Heart right ventricle (tissue), 16 donors: ENCODE measurements at regions of chr14 and their contacts with region 1.

Region 1: DNA sequence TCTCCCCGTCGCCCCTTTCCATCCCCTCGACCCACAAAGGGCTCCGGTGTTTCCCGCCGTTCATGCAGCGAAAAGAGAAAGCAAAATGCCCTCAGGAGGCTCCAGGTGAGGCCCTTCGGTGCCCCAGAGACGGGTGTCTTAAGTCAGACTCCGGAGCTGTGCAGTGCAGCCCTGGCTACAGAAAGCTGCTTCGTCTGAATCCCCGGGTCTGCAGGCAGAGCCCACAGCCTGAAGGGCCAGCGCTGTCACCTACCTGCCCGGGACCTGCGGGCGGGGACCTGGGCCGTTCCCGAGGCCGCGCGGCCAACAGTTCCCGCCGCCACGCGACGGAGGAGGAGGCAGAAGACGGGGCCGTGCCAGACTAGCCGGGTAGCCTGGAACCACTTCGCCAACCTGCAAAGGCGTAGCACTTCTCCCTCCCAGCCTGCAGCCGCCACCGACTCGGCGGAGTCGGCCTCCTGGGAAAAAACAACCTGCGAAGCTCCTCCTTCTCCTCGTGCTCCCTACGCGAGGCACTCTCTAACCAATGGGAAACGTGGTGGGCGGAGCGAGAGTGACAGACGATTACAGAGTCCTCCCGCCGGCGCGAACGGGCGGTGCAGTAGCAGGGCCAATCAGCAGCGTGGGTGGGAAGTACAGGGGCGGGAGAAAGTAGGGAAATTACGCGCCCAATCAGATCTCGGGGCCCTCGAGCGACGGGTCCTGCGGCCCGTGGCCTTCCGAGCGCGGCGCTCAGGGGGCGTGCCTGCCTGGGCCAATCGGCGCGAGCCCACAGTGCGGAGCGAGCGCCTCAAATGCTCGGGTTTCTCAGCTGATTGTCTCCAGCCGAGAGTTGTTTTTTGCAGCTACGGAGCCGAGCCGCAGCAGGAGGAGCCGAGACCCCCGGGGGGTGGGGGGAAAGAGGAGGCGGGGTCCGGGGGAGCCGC is at the starts of genes GPR137C and TXNDC16:
- DNase-seq: peak; percentile 99 to 100
- ATAC-seq: peak; percentile 97 to 100 (median 99)
- H3K4me3 ChIP-seq: peak within 1 kb of the TSS; percentile 66 to 95 (median 83)
- H3K27ac ChIP-seq: peak within 1 kb of the TSS; percentile 44 to 91 (median 81)
- H3K4me1 ChIP-seq: peaks cover 4 to 31% (median 20%) of the 10 kb centered on the region in 9 donors
- H3K27me3 ChIP-seq: no peaks in the 10 kb centered on the region
- CTCF ChIP-seq: no peak
- total RNA-seq, gene GPR137C: 0.62 to 2.3 (median 1.1) TPM
- total RNA-seq, gene TXNDC16: 3.1 to 6.3 (median 4.3) TPM

Region 2: GRCh38 chr14:52351233-52352060 is 200.9 kb before region 1 on chr14:
- intact Hi-C with region 1: no loop called
- DNase-seq: no peak
- ATAC-seq: peak in 6 of 8 donors; percentile 29 to 90 (median 66)
- H3K4me3 ChIP-seq: peak overlapping the region in 1 of 10 donors; percentile 14
- H3K27ac ChIP-seq: peak overlapping the region in 1 of 10 donors; percentile 83
- H3K4me1 ChIP-seq: peaks cover 0 to 38% (median 6%) of the 10 kb centered on the region in 9 donors
- H3K27me3 ChIP-seq: peaks cover 0 to 86% (median 0%) of the 10 kb centered on the region in 7 donors
- CTCF ChIP-seq: no peak

Region 3: DNA sequence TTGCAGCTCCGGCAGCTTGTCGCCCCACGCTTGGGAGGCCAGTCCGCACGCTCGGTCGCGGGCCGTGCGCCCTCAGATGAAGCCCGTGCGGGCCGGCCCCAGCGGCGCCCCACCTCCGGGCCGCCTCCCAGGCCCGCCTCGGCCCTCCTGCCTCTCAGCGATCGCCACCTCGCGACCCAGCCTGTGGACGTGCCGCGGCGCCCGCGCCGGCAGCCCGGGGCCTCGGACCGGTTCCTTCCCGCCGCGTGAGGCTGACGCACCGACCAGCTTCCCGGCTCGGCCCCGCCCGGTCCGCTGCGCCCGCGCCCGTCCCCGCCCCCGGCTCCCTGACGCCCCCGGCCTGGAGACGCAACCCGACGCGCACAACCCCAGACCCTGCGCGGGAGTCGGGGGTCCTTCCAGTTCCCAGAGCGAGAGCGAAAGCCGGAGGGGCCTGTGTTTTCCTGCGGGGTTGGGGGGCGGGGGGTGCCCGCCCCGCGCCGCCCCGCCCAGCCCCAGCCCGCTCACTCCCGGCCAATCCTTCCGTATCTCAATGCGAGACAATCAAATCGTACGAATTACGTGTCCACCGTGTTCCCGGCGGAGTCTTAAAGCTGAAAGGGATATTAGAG is 143.3 kb after region 1 on chr14 and contains the start of gene ERO1A:
- intact Hi-C with region 1: loop called in 3 of 10 experiments (anchors 10 kb)
- DNase-seq: peak; percentile 82 to 87
- ATAC-seq: peak; percentile 89 to 97 (median 96)
- H3K4me3 ChIP-seq: peak within 1 kb of the TSS; percentile 75 to 100 (median 96)
- H3K27ac ChIP-seq: peak within 1 kb of the TSS; percentile 82 to 100 (median 97)
- H3K4me1 ChIP-seq: peaks cover 0 to 61% (median 39%) of the 10 kb centered on the region in 9 donors
- H3K27me3 ChIP-seq: no peaks in the 10 kb centered on the region
- CTCF ChIP-seq: peak in 3 of 9 donors; percentile 27 to 43 (median 31)
- total RNA-seq, gene ERO1A: 12.7 to 54.0 (median 16.3) TPM

Region 4: DNA sequence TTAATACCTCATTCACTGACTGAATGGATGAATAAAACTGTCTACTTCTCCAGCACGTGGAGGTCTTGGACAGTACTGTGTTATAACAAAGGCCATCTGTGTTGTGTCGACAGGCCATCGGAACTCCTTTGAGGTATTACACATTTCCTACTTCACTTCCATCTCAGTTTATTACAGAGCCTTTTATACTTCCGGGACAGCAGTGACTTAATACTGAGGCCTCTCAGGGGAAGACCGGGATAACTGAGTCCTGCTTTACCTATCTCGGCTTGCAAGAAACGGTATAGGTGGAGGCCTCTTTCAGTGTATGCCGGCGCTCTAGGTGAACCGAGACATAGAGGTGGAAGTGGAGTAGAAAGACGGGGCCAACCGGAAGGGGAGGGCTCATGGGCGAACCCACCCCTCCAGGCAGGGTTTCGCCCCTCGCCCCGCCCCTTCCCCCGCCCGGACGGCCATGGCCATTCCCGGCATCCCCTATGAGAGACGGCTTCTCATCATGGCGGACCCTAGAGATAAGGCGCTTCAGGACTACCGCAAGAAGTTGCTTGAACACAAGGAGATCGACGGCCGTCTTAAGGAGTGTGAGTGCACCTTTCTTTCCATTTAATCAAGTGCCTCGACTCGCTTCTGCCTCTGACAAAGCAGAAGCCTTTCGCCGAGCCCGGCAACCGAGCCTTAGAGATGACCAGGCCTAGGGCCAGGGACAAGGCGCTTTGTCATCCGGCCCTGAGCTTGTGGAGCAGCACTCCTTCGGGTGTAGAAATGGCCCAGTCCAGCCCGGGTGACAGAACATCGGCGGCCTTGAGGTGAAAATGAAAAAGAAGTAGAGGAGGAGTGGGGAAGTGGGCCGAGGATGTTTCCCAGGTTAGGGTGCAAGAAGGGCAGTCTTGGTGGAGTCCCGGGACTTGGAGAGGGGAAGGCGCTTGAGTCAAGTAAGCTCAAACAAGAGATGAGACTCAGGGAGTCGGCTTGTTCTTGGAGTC is 154.7 kb after region 1 on chr14 and contains the start of gene PSMC6:
- intact Hi-C with region 1: loop called in 2 of 10 experiments (anchors 5 to 10 kb)
- DNase-seq: peak; percentile 96 to 97
- ATAC-seq: peak; percentile 100
- H3K4me3 ChIP-seq: peak within 1 kb of the TSS; percentile 57 to 88 (median 74)
- H3K27ac ChIP-seq: peak within 1 kb of the TSS; percentile 77 to 94 (median 90)
- H3K4me1 ChIP-seq: peaks cover 0 to 49% (median 29%) of the 10 kb centered on the region in 9 donors
- H3K27me3 ChIP-seq: no peaks in the 10 kb centered on the region
- CTCF ChIP-seq: no peak
- total RNA-seq, gene PSMC6: 78.5 to 94.0 (median 85.4) TPM

Region 5: GRCh38 chr14:52791203-52792096 is 239.1 kb after region 1 on chr14 and contains the start of gene GNPNAT1:
- intact Hi-C with region 1: loop called in 1 of 10 experiments (anchors 10 kb)
- DNase-seq: peak; percentile 83 to 87
- ATAC-seq: peak; percentile 93 to 99 (median 95)
- H3K4me3 ChIP-seq: peak within 1 kb of the TSS; percentile 51 to 93 (median 74)
- H3K27ac ChIP-seq: peak within 1 kb of the TSS; percentile 67 to 94 (median 88)
- H3K4me1 ChIP-seq: peaks cover 0 to 30% (median 20%) of the 10 kb centered on the region in 9 donors
- H3K27me3 ChIP-seq: no peaks in the 10 kb centered on the region
- CTCF ChIP-seq: peak in 1 of 9 donors; percentile 5
- total RNA-seq, gene GNPNAT1: 4.5 to 12.7 (median 5.3) TPM